ENCODE measurements at regions of chr4 and their contacts with region 1.

Region 1: DNA sequence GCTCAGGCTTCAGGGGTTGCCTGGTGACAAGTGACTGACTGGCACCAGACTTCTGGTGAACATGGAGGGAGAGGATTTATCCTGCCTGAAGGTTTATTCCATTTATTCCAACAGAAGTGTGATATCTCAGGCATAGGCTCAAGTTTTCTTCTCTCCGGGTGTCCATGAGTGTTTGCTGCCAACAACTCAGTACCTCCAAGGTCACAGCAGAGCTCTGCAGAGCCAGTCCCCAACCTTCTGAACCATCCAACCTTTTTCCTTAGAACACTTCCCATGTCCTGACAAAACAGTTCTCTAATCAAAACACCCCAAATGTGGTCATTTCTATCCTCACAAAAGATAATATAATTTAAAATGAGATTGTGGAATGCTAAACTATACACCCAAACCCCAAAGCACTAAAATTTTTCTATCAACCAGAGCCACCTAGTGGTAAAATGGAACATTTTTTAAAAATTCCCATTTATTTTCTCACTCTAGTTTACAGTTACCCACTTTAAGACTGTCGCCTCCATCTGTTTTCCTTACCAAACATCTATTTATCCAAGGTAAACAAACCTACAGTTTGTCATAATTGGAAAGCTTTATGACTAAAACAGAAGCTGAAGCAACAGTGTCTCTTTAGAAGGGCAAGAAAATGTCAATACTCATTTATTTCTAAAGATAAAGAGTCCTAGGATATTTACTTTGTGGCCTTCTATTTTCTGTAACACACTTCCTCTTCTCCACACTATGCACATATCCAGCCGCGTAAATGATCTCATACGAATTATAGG is 39.6 kb downstream of the TMEM154 start:
- DNase-seq: peak in 1 of 3 donors; percentile 35
- H3K4me3 ChIP-seq: peak overlapping the region in 1 of 3 experiments; percentile 9
- H3K4me3 Mint-ChIP-seq: peak overlapping the region in 1 of 2 donors; percentile 65
- H3K27ac ChIP-seq: peak overlapping the region; percentile 41 to 95
- H3K27ac Mint-ChIP-seq: peak overlapping the region; percentile 81 to 97 (median 88)
- H3K4me1 ChIP-seq: peaks cover 90 to 100% of the 10 kb centered on the region in 2 donors
- H3K4me1 Mint-ChIP-seq: peaks cover 88% of the 10 kb centered on the region
- H3K27me3 ChIP-seq: no peaks in the 10 kb centered on the region
- H3K27me3 Mint-ChIP-seq: peaks cover 0 to 2% (median 2%) of the 10 kb centered on the region in 3 donors
- CTCF ChIP-seq: peak; percentile 90

Region 2: GRCh38 chr4:152500800-152501434 is 139.3 kb before region 1 on chr4:
- intact Hi-C with region 1: loop called in 1 of 2 experiments (anchors 10 kb)
- DNase-seq: peak; percentile 72 to 79 (median 76)
- H3K4me3 ChIP-seq: peak overlapping the region in 1 of 3 experiments; percentile 37
- H3K4me3 Mint-ChIP-seq: peak overlapping the region in 1 of 2 donors; percentile 21
- H3K27ac ChIP-seq: peak overlapping the region in 1 of 2 donors; percentile 45
- H3K27ac Mint-ChIP-seq: peak overlapping the region in 4 of 7 donors; percentile 29 to 81 (median 68)
- H3K4me1 ChIP-seq: peaks cover 5 to 13% of the 10 kb centered on the region in 2 donors
- H3K4me1 Mint-ChIP-seq: peaks cover 27% of the 10 kb centered on the region
- H3K27me3 ChIP-seq: no peaks in the 10 kb centered on the region
- H3K27me3 Mint-ChIP-seq: no peaks in the 10 kb centered on the region
- CTCF ChIP-seq: peak; percentile 87

Region 3: GRCh38 chr4:152679414-152680281 is 39.4 kb after region 1 on chr4 and contains the start of gene TMEM154:
- intact Hi-C with region 1: loop called (anchors 5 kb)
- DNase-seq: peak; percentile 86 to 93 (median 92)
- H3K4me3 ChIP-seq: peak within 1 kb of the TSS; percentile 80 to 85 (median 85)
- H3K4me3 Mint-ChIP-seq: peak within 1 kb of the TSS; percentile 95 to 97
- H3K27ac ChIP-seq: peak within 1 kb of the TSS; percentile 85 to 88
- H3K27ac Mint-ChIP-seq: peak within 1 kb of the TSS; percentile 92 to 97 (median 95)
- H3K4me1 ChIP-seq: peaks cover 45 to 59% of the 10 kb centered on the region in 2 donors
- H3K4me1 Mint-ChIP-seq: peaks cover 61% of the 10 kb centered on the region
- H3K27me3 ChIP-seq: no peaks in the 10 kb centered on the region
- H3K27me3 Mint-ChIP-seq: peaks cover 0 to 2% (median 0%) of the 10 kb centered on the region in 3 donors
- CTCF ChIP-seq: no peak
- polyA plus RNA-seq, gene TMEM154: 24.7 to 157 (median 117) TPM

Region 4: GRCh38 chr4:152795891-152796290 is 155.6 kb after region 1 on chr4:
- intact Hi-C with region 1: no loop called
- DNase-seq: no peak
- H3K4me3 ChIP-seq: no peak overlapping the region
- H3K4me3 Mint-ChIP-seq: no peak overlapping the region
- H3K27ac ChIP-seq: no peak overlapping the region
- H3K27ac Mint-ChIP-seq: peak overlapping the region in 1 of 7 donors; percentile 33
- H3K4me1 ChIP-seq: no peaks in the 10 kb centered on the region
- H3K4me1 Mint-ChIP-seq: peaks cover 15% of the 10 kb centered on the region
- H3K27me3 ChIP-seq: no peaks in the 10 kb centered on the region
- H3K27me3 Mint-ChIP-seq: no peaks in the 10 kb centered on the region
- CTCF ChIP-seq: no peak

Measured in CD14-positive monocyte (primary cell).